ENCODE measurements at regions of chr1 and their contacts with region 1.

Region 1: GRCh38 chr1:70034403-70034802 is 171.0 kb downstream of the LRRC40 start:
- DNase-seq: peak; percentile 14 to 77 (median 32)
- ATAC-seq: peak; percentile 97
- H3K4me3 ChIP-seq: no peak overlapping the region
- H3K27ac ChIP-seq: no peak overlapping the region
- H3K4me1 ChIP-seq: peaks cover 0 to 3% of the 10 kb centered on the region in 2 experiments; a peak in 1 of 5 replicates
- H3K27me3 ChIP-seq: no peaks in the 10 kb centered on the region
- CTCF ChIP-seq: peak; percentile 67 to 86 (median 73)
- EP300 ChIP-seq: no peak
- POLR2A ChIP-seq: no peak
- RAD21 ChIP-seq: peak; percentile 98 to 99

Region 2: GRCh38 chr1:70134148-70134547 is 99.7 kb after region 1 on chr1:
- CTCF ChIA-PET with region 1: no interaction called
- POLR2A ChIA-PET with region 1: no interaction called
- in situ Hi-C with region 1: loop called (anchors 10 kb)
- intact Hi-C with region 1: loop called (anchors 2 kb)
- DNase-seq: no peak
- ATAC-seq: no peak
- H3K4me3 ChIP-seq: no peak overlapping the region
- H3K27ac ChIP-seq: no peak overlapping the region
- H3K4me1 ChIP-seq: no peaks in the 10 kb centered on the region
- H3K27me3 ChIP-seq: no peaks in the 10 kb centered on the region
- CTCF ChIP-seq: no peak
- EP300 ChIP-seq: no peak
- POLR2A ChIP-seq: no peak
- RAD21 ChIP-seq: no peak

Region 3: DNA sequence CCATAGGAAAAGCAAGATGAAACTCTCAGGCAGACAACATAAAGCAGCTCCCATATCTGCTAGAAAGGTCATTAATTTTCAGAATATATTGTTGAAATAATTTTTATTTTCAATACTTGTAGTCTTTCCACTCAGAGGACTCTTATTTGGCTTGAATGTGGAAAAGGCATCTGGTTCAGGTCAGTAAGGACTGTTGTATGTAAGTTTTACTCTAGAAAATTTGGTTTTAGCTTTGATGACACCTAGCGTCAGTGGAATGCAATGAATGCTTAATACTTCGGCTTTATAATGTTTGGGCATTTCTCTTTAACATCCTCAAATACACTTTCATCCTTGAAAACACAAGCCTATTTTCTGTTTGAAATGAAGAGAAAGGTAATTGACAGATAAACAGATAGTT is 107.7 kb after region 1 on chr1:
- CTCF ChIA-PET with region 1: interaction called, 13 read pairs
- POLR2A ChIA-PET with region 1: no interaction called
- in situ Hi-C with region 1: loop called (anchors 10 kb)
- intact Hi-C with region 1: loop called (anchors 1 kb)
- DNase-seq: peak in 3 of 4 experiments; percentile 9 to 12 (median 11)
- ATAC-seq: peak; percentile 74
- H3K4me3 ChIP-seq: no peak overlapping the region
- H3K27ac ChIP-seq: no peak overlapping the region
- H3K4me1 ChIP-seq: 0 out of 5 replicates have a peak, but pooled peaks cover 0 to 5% of the 10 kb centered on the region in 2 experiments
- H3K27me3 ChIP-seq: no peaks in the 10 kb centered on the region
- CTCF ChIP-seq: peak in 2 of 3 experiments; percentile 12 to 54; a peak in 3 of 6 replicates
- EP300 ChIP-seq: no peak
- POLR2A ChIP-seq: no peak
- RAD21 ChIP-seq: peak; percentile 66 to 74

Region 4: DNA sequence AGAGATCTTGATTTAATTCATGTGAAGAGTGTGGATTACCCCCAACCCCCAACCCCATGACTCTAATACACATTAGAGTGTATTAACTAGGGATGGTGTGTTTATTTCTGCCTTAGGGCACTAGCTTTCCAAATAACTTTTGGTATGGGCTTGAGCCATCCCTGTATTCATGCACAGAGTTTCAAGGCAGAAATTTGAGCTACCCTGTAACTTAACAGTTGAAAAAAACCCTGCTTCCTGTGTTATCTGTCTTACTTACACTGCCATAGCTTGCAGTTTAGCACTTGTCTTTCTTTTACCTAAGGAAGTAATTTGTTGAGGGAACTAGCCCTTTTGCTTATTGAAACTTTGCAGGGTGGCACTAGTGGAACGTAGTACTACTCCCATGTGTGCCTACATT is 193.0 kb after region 1 on chr1:
- CTCF ChIA-PET with region 1: no interaction called
- POLR2A ChIA-PET with region 1: interaction called, 3 read pairs
- in situ Hi-C with region 1: no loop called
- intact Hi-C with region 1: loop called (anchors 5 kb)
- DNase-seq: peak in 1 of 4 experiments; percentile 9
- ATAC-seq: peak; percentile 72
- H3K4me3 ChIP-seq: no peak overlapping the region
- H3K27ac ChIP-seq: no peak overlapping the region
- H3K4me1 ChIP-seq: peaks cover 0 to 16% of the 10 kb centered on the region in 2 experiments; a peak in 2 of 5 replicates
- H3K27me3 ChIP-seq: no peaks in the 10 kb centered on the region
- CTCF ChIP-seq: no peak
- EP300 ChIP-seq: no peak
- POLR2A ChIP-seq: no peak
- RAD21 ChIP-seq: no peak